GM13976 (cell line): ENCODE measurements at regions of chr4 and their contacts with region 1.

Region 1: GRCh38 chr4:152843481-152844090 is 63.8 kb downstream of the ARFIP1 start:
- DNase-seq: no peak
- CTCF ChIP-seq: no peak

Region 2: GRCh38 chr4:153127760-153128494 is 284.3 kb after region 1 on chr4:
- in situ Hi-C with region 1: loop called (anchors 10 kb)
- DNase-seq: peak; percentile 77
- CTCF ChIP-seq: peak; percentile 72

Region 3: GRCh38 chr4:153603258-153603657 is 759.7 kb after region 1 on chr4:
- in situ Hi-C with region 1: no loop called
- DNase-seq: no peak
- CTCF ChIP-seq: no peak